Activated CD4-positive, alpha-beta T cell treated with anti-CD3 and anti-CD28 coated beads, Interleukin-2, amount 10 ng/mL, durations not matched to agents 24 days and 14 days (primary cell): ENCODE measurements at regions of chr10 and their contacts with region 1.

Region 1: GRCh38 chr10:73730153-73730906 is 13.8 kb upstream of the SEC24C start:
- DNase-seq: peak; percentile 99
- H3K4me3 Mint-ChIP-seq: peak overlapping the region; percentile 100
- H3K27ac Mint-ChIP-seq: peak overlapping the region; percentile 99
- H3K4me1 Mint-ChIP-seq: peaks cover 4% of the 10 kb centered on the region
- H3K27me3 Mint-ChIP-seq: no peaks in the 10 kb centered on the region

Region 2: GRCh38 chr10:73717556-73717955 is 12.8 kb before region 1 on chr10:
- intact Hi-C with region 1: no loop called
- DNase-seq: no peak
- H3K4me3 Mint-ChIP-seq: no peak overlapping the region
- H3K27ac Mint-ChIP-seq: peak overlapping the region; percentile 13
- H3K4me1 Mint-ChIP-seq: peaks cover 6% of the 10 kb centered on the region
- H3K27me3 Mint-ChIP-seq: no peaks in the 10 kb centered on the region

Region 3: GRCh38 chr10:73785221-73785720 is 54.9 kb after region 1 on chr10 and contains the start of gene ZSWIM8:
- intact Hi-C with region 1: loop called (anchors 2 kb)
- DNase-seq: peak; percentile 94
- H3K4me3 Mint-ChIP-seq: peak within 1 kb of the TSS; percentile 91
- H3K27ac Mint-ChIP-seq: peak within 1 kb of the TSS; percentile 98
- H3K4me1 Mint-ChIP-seq: peaks cover 39% of the 10 kb centered on the region
- H3K27me3 Mint-ChIP-seq: no peaks in the 10 kb centered on the region
- total RNA-seq, gene ZSWIM8: 50.8 and 53.5 TPM in 2 replicates

Region 4: DNA sequence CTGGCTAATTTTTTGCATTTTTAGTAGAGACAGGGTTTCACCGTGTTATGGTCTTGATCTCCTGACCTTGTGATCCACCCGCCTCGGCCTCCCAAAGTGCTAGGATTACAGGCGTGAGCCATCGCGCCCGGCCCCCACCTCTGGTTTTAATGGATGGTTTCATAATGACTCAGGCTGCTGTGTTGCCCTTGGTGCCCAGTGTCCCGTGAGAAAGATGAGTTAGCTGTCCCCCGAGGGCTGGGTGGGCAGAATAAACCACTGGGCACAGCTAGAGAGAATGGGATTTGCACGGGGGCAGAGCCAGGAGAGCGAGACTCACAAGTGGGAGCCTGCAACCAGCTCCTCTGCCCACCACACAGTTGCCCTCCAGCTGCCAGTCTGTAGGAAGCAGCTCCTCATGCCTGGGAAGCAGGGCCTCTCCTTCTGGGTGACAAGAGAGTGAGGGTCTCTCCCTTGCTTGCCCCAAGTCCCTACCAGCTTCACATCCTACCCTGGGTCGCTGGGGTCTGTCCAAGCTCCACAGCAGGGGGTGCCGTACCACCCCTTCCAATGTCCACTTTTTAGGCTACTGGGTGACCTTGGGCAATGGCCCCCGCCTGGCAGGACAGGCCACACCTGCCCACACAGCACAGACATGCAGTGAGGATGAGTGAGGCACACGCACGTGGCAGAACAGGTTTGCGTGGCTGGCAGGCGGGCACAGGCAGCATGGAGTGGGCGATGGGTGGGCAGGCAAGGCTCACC is 97.2 kb after region 1 on chr10:
- intact Hi-C with region 1: no loop called
- DNase-seq: no peak
- H3K4me3 Mint-ChIP-seq: no peak overlapping the region
- H3K27ac Mint-ChIP-seq: no peak overlapping the region
- H3K4me1 Mint-ChIP-seq: no peaks in the 10 kb centered on the region
- H3K27me3 Mint-ChIP-seq: no peaks in the 10 kb centered on the region